ENCODE measurements at regions of chr5 and their contacts with region 1.

Region 1: GRCh38 chr5:61331407-61332357 is at the start of gene ZSWIM6:
- DNase-seq: peak; percentile 96 to 100 (median 98)
- H3K4me3 ChIP-seq: peak within 1 kb of the TSS; percentile 79
- H3K4me3 Mint-ChIP-seq: peak within 1 kb of the TSS; percentile 85 to 99 (median 91)
- H3K27ac ChIP-seq: peak within 1 kb of the TSS; percentile 80
- H3K27ac Mint-ChIP-seq: peak within 1 kb of the TSS; percentile 82 to 99 (median 97)
- H3K4me1 ChIP-seq: peaks cover 21% of the 10 kb centered on the region
- H3K4me1 Mint-ChIP-seq: peaks cover 51 to 52% (median 52%) of the 10 kb centered on the region in 3 donors
- H3K27me3 ChIP-seq: no peaks in the 10 kb centered on the region
- H3K27me3 Mint-ChIP-seq: peaks cover 6 to 11% of the 10 kb centered on the region in 2 donors
- total RNA-seq, gene ZSWIM6: 5.9 to 6.0 TPM

Region 2: DNA sequence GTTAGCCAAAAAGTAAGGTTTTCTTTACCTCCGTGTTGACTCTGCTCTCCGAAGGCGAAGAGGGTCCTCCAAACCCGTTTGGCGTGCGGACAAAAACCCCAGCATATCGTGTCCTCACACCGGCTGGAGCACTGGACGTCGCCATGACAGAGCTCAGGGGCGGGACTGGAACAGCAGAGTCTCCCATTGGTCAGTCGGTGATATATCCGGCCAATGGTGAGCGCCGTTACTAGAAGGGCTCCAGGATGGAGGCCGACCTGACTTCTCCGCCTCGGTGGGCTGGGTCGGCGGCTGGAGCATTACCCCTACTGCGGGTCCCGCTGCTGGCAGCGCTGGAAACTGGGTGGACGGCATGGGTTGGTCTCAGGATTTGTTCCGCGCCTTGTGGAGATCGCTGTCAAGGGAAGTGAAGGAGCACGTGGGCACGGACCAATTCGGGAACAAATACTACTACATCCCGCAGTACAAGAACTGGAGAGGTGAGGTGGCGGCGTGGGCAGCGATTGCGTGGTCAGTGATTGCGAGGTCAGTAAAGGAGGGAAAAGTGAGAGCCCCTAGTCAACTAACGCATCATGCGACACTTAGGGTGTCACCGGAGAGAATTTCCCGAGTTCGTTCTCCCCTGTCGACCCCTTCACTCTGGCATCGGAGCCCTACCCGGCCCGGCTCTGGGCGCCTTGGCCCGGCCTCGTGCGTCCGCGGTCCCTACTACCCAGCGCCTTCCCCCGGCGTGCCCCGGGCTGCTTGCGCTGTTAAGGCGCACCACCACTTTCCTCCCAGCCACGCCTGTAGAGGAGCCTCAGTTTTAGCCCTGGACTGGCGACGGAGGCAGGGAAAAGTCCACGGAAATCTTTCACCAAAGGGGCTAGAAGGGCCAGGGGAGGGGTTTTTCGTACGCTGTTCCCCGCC is 386.5 kb before region 1 on chr5 and contains the starts of genes ERCC8 and NDUFAF2:
- CTCF ChIA-PET with region 1: no interaction called
- POLR2A ChIA-PET with region 1: interaction called, 12 read pairs
- DNase-seq: peak; percentile 81 to 91 (median 85)
- H3K4me3 ChIP-seq: peak within 1 kb of the TSS; percentile 98
- H3K4me3 Mint-ChIP-seq: no peak within 1 kb of the TSS
- H3K27ac ChIP-seq: peak within 1 kb of the TSS; percentile 77
- H3K27ac Mint-ChIP-seq: peak within 1 kb of the TSS in 4 of 8 donors; percentile 53 to 92 (median 84)
- H3K4me1 ChIP-seq: peaks cover 15% of the 10 kb centered on the region
- H3K4me1 Mint-ChIP-seq: peaks cover 18 to 29% (median 24%) of the 10 kb centered on the region in 3 donors
- H3K27me3 ChIP-seq: no peaks in the 10 kb centered on the region
- H3K27me3 Mint-ChIP-seq: peaks cover 0 to 2% of the 10 kb centered on the region in 2 donors
- total RNA-seq, gene ERCC8: 14.0 to 14.4 TPM
- total RNA-seq, gene NDUFAF2: 43.9 to 46.8 TPM

Region 3: GRCh38 chr5:61171479-61171878 is 160.2 kb before region 1 on chr5:
- CTCF ChIA-PET with region 1: no interaction called
- POLR2A ChIA-PET with region 1: no interaction called
- DNase-seq: no peak
- H3K4me3 ChIP-seq: no peak overlapping the region
- H3K4me3 Mint-ChIP-seq: no peak overlapping the region
- H3K27ac ChIP-seq: no peak overlapping the region
- H3K27ac Mint-ChIP-seq: no peak overlapping the region
- H3K4me1 ChIP-seq: no peaks in the 10 kb centered on the region
- H3K4me1 Mint-ChIP-seq: no peaks in the 10 kb centered on the region
- H3K27me3 ChIP-seq: no peaks in the 10 kb centered on the region
- H3K27me3 Mint-ChIP-seq: peaks cover 1 to 6% of the 10 kb centered on the region in 2 donors

Region 4: DNA sequence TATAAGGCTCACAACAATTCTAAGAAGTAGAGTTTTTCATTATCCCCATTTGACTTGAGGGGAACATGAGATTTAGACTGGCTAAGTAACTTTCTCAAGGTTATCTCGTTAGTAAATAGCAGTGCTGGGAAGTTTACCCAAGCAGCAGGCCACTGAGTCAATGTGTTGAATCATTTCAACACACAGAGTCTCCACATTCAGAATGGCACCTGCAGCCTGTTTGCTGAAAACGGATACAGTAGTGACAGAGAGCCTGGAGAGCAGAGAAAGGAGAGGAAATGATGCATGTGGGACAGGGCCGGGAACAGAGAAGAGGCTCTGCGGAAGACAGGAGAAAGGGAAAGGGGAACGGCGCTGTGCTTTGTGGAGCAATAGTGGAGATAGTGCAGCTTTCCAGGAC is 33.1 kb before region 1 on chr5:
- CTCF ChIA-PET with region 1: no interaction called
- POLR2A ChIA-PET with region 1: no interaction called
- DNase-seq: no peak
- H3K4me3 ChIP-seq: no peak overlapping the region
- H3K4me3 Mint-ChIP-seq: no peak overlapping the region
- H3K27ac ChIP-seq: no peak overlapping the region
- H3K27ac Mint-ChIP-seq: no peak overlapping the region
- H3K4me1 ChIP-seq: no peaks in the 10 kb centered on the region
- H3K4me1 Mint-ChIP-seq: no peaks in the 10 kb centered on the region
- H3K27me3 ChIP-seq: no peaks in the 10 kb centered on the region
- H3K27me3 Mint-ChIP-seq: peaks cover 0 to 6% of the 10 kb centered on the region in 2 donors

Region 5: GRCh38 chr5:61408476-61409168 is 76.9 kb after region 1 on chr5:
- CTCF ChIA-PET with region 1: interaction called, 14 read pairs
- POLR2A ChIA-PET with region 1: interaction called, 16 read pairs
- DNase-seq: peak; percentile 98
- H3K4me3 ChIP-seq: peak overlapping the region; percentile 36
- H3K4me3 Mint-ChIP-seq: peak overlapping the region; percentile 72 to 88 (median 80)
- H3K27ac ChIP-seq: no peak overlapping the region
- H3K27ac Mint-ChIP-seq: peak overlapping the region; percentile 83 to 95 (median 91)
- H3K4me1 ChIP-seq: peaks cover 16% of the 10 kb centered on the region
- H3K4me1 Mint-ChIP-seq: peaks cover 29 to 56% (median 31%) of the 10 kb centered on the region in 3 donors
- H3K27me3 ChIP-seq: no peaks in the 10 kb centered on the region
- H3K27me3 Mint-ChIP-seq: peaks cover 0 to 2% of the 10 kb centered on the region in 2 donors

Region 6: DNA sequence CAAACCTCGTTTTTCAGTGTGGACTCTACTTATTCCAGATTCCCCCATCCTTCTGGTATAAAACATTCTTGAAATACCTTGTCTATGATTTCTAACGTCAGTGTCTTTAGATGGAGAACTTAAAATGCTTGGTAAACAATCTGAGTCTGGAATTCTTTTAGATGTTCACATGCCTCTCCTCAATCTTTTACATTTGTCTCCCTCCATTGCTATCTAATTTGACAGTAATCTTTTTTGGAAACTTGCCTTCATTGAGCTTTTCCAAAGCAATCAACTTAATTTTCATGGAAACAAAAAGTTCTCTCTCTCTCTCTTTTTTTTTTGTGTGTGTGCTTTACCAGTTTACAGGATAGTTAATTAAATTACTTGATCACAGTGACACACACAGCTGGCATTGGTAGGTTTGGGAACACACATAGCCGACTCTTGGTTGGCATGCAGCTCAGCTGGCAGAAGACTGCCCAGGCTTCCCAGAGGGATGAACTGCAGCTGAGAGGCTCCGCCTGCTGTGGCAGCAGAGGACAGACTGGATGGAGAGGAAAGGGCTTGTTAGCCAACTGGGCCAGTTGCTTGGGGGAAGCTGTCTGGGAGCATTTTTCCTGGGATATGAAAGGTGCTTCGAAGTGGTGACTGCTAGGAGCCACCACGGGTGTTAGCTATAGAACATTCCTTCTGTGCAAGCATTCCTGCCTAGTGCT is 271.7 kb after region 1 on chr5:
- CTCF ChIA-PET with region 1: no interaction called
- POLR2A ChIA-PET with region 1: no interaction called
- DNase-seq: no peak
- H3K4me3 ChIP-seq: no peak overlapping the region
- H3K4me3 Mint-ChIP-seq: no peak overlapping the region
- H3K27ac ChIP-seq: no peak overlapping the region
- H3K27ac Mint-ChIP-seq: no peak overlapping the region
- H3K4me1 ChIP-seq: no peaks in the 10 kb centered on the region
- H3K4me1 Mint-ChIP-seq: no peaks in the 10 kb centered on the region
- H3K27me3 ChIP-seq: peaks cover 4% of the 10 kb centered on the region
- H3K27me3 Mint-ChIP-seq: peaks cover 17 to 18% of the 10 kb centered on the region in 2 donors

Measured in CD8-positive, alpha-beta memory T cell (primary cell).